OCI-LY7 (cell line): ENCODE measurements at regions of chrX and their contacts with region 1.

Region 1: DNA sequence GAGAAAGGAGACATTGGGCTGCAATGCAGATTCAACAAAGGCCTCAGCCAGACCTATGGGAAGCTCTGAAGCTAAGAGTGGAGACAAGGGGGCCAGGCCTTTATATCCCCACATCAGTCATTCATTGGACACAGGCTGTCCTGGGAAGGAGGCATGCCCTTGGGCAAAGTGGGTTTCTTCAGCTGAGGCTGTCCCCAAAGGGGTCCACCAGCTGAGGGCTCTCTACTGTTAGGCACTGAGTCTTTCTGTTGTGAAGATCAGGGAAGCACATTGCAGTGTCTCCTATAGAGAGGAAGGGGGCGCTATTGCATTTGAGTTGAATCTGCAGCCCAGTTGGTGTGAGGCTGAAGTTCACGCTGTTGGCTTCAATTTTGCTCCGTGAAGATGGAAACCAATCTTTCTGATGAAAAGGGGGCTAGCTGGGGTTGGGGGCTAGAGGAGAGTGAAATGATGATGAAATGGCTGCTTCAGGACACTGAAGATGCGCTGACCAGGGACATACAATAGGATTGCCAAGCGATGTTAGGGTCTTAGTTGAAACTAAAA is 48.0 kb downstream of the SLC25A5 start:
- DNase-seq: peak; percentile 83
- H3K4me3 ChIP-seq: no peak overlapping the region
- H3K27ac ChIP-seq: no peak overlapping the region
- H3K4me1 ChIP-seq: peaks cover 4% of the 10 kb centered on the region
- CTCF ChIP-seq: peak; percentile 86

Region 2: DNA sequence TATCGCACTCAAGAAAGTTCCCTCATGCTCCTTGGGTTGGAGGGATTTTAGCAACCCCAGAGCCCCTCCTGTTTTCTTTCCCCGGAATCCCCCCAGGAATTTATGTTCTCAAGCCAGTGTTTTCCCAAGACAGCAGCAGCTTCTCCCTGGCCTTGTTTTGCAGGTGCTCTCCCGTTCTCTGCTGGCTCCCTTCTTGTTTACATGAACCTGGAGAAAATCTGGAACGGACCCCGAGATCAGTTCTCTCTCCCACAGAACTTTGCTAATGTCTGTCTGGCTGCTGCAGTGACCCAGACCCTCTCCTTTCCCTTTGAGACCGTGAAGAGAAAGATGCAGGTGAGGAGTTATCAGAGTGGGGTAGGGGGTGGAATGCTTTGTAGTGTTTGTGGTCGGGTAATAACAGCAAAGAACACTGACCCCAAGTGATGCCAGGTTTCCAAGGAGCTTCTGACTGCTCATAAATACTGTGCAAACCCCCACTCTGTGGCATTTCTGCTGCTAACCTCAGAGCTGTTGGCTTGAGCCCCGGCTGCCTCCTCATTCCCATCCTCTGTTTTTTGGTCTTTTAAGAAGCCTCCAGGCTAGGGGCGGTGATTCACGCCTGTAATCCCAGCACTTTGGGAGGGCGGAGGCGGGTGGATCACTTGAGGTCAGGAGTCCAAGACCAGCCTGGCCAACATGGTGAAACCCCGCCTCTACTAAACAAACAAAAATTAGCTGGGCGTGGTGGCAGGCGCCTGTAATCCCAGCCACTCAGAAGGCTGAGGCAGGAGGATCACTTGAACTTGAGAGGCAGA is 106.0 kb before region 1 on chrX:
- CTCF ChIA-PET with region 1: no interaction called
- POLR2A ChIA-PET with region 1: no interaction called
- intact Hi-C with region 1: loop called (anchors 10 kb)
- DNase-seq: no peak
- H3K4me3 ChIP-seq: no peak overlapping the region
- H3K27ac ChIP-seq: no peak overlapping the region
- H3K4me1 ChIP-seq: no peaks in the 10 kb centered on the region
- CTCF ChIP-seq: no peak

Region 3: GRCh38 chrX:119468930-119469635 is 47.1 kb before region 1 on chrX:
- CTCF ChIA-PET with region 1: no interaction called
- POLR2A ChIA-PET with region 1: no interaction called
- intact Hi-C with region 1: loop called (anchors 2 kb)
- DNase-seq: peak; percentile 87
- H3K4me3 ChIP-seq: peak overlapping the region; percentile 99
- H3K27ac ChIP-seq: peak overlapping the region; percentile 85
- H3K4me1 ChIP-seq: peaks cover 21% of the 10 kb centered on the region
- CTCF ChIP-seq: peak; percentile 73

Region 4: DNA sequence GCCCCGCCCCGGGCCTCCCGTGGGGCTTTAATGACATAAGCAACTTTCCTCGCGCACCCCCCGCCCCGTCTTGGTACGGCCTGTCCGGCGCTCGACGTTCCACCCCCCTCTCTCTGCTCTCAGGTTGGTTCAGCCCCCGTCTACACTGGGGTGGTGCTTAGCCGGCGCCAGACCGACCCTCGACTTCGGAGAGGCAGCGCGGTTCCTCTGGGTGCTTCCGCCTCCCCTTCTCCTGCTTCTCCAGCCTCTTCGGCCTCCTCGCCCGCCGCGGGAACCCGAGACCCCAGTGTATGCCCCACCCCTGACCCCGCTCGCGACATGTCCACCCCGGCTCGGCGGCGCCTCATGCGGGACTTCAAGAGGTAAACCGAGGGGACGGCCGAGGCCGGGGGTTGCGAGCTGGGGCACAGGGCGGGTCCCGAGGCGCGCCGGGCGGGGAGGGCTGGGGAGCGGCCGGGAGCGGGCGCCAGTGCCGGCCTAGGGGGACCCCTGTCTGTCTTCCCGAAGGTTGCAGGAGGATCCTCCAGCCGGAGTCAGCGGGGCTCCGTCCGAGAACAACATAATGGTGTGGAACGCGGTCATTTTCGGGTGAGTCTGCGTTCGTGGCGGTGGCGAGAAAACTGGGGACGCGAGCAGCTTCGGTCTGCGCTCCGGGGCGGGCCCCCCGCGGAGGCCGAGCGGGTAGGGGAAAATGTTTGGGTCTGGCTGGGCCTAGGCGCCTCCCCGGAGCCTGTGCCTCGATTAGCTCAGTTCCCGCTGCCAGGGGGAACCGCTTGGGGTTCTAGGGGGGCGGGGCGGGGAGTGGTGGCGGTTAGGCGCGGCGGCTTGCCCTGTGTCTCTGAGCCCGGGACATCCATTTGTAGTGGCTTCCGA is 58.4 kb after region 1 on chrX and contains the start of gene UBE2A:
- CTCF ChIA-PET with region 1: no interaction called
- POLR2A ChIA-PET with region 1: no interaction called
- intact Hi-C with region 1: loop called (anchors 5 kb)
- DNase-seq: peak; percentile 94
- H3K4me3 ChIP-seq: peak within 1 kb of the TSS; percentile 87
- H3K27ac ChIP-seq: peak within 1 kb of the TSS; percentile 73
- H3K4me1 ChIP-seq: peaks cover 32% of the 10 kb centered on the region
- CTCF ChIP-seq: peak; percentile 61
- total RNA-seq, gene UBE2A: 21.8 and 30.0 TPM in 2 replicates

Region 5: GRCh38 chrX:119606280-119607015 is 90.2 kb after region 1 on chrX and contains the start of gene NKRF:
- CTCF ChIA-PET with region 1: no interaction called
- POLR2A ChIA-PET with region 1: no interaction called
- intact Hi-C with region 1: loop called (anchors 2 kb)
- DNase-seq: peak; percentile 90
- H3K4me3 ChIP-seq: peak within 1 kb of the TSS; percentile 90
- H3K27ac ChIP-seq: peak within 1 kb of the TSS; percentile 68
- H3K4me1 ChIP-seq: peaks cover 24% of the 10 kb centered on the region
- CTCF ChIP-seq: no peak
- total RNA-seq, gene NKRF: 10.7 and 11.9 TPM in 2 replicates

Region 6: GRCh38 chrX:119729408-119730201 is 213.4 kb after region 1 on chrX:
- CTCF ChIA-PET with region 1: interaction called, 7 read pairs
- POLR2A ChIA-PET with region 1: interaction called, 3 read pairs
- intact Hi-C with region 1: loop called (anchors 1 kb)
- DNase-seq: peak; percentile 71
- H3K4me3 ChIP-seq: no peak overlapping the region
- H3K27ac ChIP-seq: no peak overlapping the region
- H3K4me1 ChIP-seq: peaks cover 14% of the 10 kb centered on the region
- CTCF ChIP-seq: peak; percentile 76